Panc1 (cell line): ENCODE measurements at regions of chr10 and their contacts with region 1.

Region 1: DNA sequence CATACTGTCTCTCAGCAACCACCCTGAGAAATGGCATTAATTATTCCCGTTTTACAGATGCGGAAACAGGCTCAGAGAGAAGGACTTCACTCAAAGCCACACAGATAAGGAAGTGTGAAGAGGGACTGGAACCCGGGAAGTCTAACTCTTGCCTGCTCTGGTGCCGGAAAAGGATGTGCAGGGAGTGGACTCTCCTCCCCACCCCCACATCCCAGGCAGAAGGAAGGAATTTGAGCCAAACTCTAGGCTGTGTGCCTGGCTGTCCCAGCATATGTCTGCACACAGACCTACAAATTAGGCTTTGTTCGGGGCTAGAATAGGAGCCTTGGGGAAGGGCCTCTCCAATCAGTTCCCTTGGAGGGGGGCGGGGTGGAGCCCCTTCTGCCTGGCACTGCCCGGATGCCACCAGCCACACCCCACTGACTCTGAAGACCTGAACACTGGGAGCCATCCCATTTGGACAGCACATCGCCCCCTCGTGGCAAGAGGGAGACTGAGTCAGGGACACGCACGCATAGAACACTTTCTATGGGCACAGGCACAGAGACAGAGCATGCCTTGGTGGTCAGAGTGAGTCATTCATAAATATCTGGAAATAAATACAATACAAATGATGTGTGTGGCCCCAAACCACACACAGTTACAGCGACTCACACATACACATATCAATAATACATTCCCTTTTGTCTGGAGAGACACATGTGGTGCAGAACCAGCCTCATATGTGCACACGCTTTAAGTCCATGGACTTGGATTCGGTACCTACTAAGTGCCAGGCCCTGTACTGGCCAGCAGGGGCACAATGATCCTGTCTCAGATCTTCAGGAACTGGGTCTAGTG is 13.1 kb downstream of the LZTS2 start:
- DNase-seq: no peak
- ATAC-seq: peak; percentile 87
- H3K4me3 ChIP-seq: no peak overlapping the region
- H3K27ac ChIP-seq: no peak overlapping the region
- H3K4me1 ChIP-seq: peaks cover 18% of the 10 kb centered on the region
- H3K27me3 ChIP-seq: no peaks in the 10 kb centered on the region
- CTCF ChIP-seq: peak; percentile 97

Region 2: GRCh38 chr10:100934084-100934659 is 78.6 kb before region 1 on chr10:
- CTCF ChIA-PET with region 1: no interaction called
- POLR2A ChIA-PET with region 1: no interaction called
- in situ Hi-C with region 1: no loop called
- intact Hi-C with region 1: no loop called
- DNase-seq: no peak
- ATAC-seq: no peak
- H3K4me3 ChIP-seq: no peak overlapping the region
- H3K27ac ChIP-seq: no peak overlapping the region
- H3K4me1 ChIP-seq: no peaks in the 10 kb centered on the region
- H3K27me3 ChIP-seq: no peaks in the 10 kb centered on the region
- CTCF ChIP-seq: no peak; the same call in 1 of the 2 replicates

Region 3: GRCh38 chr10:100993986-100994708 is 18.6 kb before region 1 on chr10:
- CTCF ChIA-PET with region 1: interaction called, 11 read pairs
- POLR2A ChIA-PET with region 1: interaction called, 3 read pairs
- in situ Hi-C with region 1: no loop called
- intact Hi-C with region 1: loop called (anchors 1 kb)
- DNase-seq: no peak
- ATAC-seq: no peak
- H3K4me3 ChIP-seq: no peak overlapping the region
- H3K27ac ChIP-seq: peak overlapping the region; percentile 40
- H3K4me1 ChIP-seq: peaks cover 34% of the 10 kb centered on the region
- H3K27me3 ChIP-seq: no peaks in the 10 kb centered on the region
- CTCF ChIP-seq: peak; percentile 92

Region 4: DNA sequence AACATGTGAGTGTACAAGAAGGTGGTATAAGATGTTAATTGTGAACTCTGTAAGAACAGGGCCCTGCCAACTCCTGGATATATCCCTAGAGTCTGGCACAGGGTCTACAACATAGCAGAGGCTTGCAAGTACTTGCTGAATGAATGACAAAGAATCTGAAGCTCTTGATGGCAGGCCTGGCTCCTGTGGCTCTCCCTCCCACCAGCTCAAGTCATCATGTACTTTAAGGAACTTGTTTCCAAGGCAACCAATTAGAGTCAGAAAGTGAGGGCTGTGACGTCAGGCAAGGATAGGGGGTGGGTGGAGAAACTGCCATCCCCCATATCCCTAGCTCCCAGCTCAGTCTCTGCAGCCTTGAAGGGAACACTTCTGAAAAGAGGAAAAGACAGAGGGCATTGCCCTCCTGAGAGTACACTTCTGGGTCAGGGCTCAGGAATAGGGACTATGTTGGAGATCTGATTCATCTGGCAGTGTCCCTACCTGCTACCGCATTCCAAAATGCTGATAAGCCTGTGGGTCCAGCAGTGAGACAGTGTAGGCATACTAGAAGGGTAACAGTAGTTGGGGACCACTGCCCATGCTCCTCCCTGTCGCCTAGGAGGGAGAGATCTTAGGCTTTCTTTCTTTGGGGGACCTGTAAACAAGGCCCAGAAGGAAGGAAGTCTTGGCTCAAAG is 306.6 kb after region 1 on chr10:
- CTCF ChIA-PET with region 1: no interaction called
- POLR2A ChIA-PET with region 1: no interaction called
- in situ Hi-C with region 1: no loop called
- intact Hi-C with region 1: no loop called
- DNase-seq: no peak
- ATAC-seq: no peak
- H3K4me3 ChIP-seq: no peak overlapping the region
- H3K27ac ChIP-seq: no peak overlapping the region
- H3K4me1 ChIP-seq: no peaks in the 10 kb centered on the region
- H3K27me3 ChIP-seq: 0 out of 2 replicates have a peak, but pooled peaks cover 5% of the 10 kb centered on the region
- CTCF ChIP-seq: no peak